Activated T-helper 2 cell treated with anti-CD3 and anti-CD28 coated beads, Interferon-gamma antibody, Interleukin-2, Interleukin-4, amounts not matched to agents 10 μg/mL and 5 μg/mL and 100 μg/mL, durations not matched to agents 14 hours and 24 hours and 36 hours (primary cell): ENCODE measurements at regions of chr5 and their contacts with region 1.

Region 1: GRCh38 chr5:141691867-141692532 is 10.0 kb upstream of the ARAP3 start:
- DNase-seq: peak; percentile 81
- H3K4me3 Mint-ChIP-seq: peak overlapping the region; percentile 80
- H3K27ac Mint-ChIP-seq: peak overlapping the region; percentile 56
- H3K4me1 Mint-ChIP-seq: peaks cover 29% of the 10 kb centered on the region
- H3K27me3 Mint-ChIP-seq: peaks cover 35% of the 10 kb centered on the region

Region 2: DNA sequence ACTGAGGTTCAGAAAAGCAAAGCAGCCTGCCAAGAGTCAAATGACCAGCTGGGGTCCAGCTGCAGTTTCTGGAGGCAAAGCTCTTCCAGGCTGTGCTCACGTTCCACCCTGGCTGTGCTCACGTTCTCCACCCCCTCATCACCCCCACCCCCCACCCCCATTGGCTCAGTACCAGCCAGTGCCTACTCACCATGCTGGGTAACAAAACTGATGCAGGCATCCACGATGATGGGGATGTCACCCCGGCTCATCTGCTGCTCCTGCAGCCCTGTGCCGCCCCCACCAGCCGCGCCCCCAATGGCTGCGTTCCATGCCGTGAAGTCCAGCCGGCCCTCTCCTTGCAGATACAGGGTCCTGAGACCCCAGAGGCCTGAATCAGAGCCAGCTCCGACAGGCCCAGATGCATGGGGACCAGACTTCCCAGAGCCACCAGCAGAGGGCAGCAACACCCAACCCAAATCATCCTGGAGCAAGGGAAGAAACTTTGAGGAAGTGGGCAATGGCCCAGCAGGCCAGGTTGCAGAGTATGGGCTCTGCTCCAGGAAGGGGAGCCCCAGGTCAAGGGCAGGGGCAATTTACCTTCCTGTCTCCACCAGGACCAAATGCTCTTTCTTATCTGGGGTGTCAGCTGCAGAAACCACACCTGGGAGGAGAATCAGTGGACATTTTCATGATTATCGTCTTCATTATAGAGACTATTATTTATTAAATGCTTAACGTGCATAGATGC is 27.1 kb before region 1 on chr5:
- intact Hi-C with region 1: no loop called
- DNase-seq: peak; percentile 61
- H3K4me3 Mint-ChIP-seq: no peak overlapping the region
- H3K27ac Mint-ChIP-seq: no peak overlapping the region
- H3K4me1 Mint-ChIP-seq: peaks cover 5% of the 10 kb centered on the region
- H3K27me3 Mint-ChIP-seq: no peaks in the 10 kb centered on the region

Region 3: GRCh38 chr5:141677415-141677814 is 14.6 kb before region 1 on chr5:
- intact Hi-C with region 1: no loop called
- DNase-seq: no peak
- H3K4me3 Mint-ChIP-seq: no peak overlapping the region
- H3K27ac Mint-ChIP-seq: no peak overlapping the region
- H3K4me1 Mint-ChIP-seq: peaks cover 9% of the 10 kb centered on the region
- H3K27me3 Mint-ChIP-seq: no peaks in the 10 kb centered on the region

Region 4: DNA sequence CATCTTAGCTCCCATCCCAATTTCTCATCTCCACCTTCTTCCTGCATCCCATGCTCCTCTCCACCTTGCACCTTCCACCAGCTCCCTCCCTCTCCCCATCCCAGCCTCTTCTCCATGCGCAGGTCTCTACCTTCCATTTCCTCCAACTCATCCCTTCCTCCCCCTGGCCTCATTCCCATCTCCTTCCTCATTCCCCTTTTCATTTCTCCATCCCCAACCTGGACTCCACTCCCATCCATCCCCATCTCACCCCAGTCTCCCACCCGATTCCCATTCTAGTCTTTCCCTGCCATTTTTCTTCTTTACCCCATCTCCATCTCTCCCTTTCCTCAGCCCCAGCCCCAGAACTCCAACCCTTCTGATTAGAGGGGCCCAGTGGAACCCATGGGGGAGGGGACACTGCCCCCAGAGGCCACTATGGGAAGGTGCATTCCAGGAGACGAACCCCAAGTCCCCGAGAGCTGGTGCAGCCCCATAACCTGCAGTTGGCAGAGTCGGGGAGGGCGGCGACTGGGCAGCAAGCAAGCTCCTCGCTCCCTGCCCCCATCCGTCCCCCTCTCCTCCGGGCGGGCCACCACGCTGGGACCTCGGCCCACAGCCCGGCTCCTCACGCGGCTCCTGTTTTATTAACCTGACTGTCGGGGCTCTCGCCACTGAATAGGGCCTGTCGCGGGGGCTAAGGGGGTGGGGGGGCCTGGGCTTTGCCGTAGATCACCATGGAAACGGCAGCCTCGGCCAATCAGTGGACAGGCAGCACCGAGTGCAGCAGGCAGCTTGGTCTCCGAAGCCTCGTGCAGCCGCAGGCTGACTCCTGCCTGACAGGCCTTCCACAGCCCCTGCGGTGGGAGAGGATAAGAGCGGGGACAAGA is 119.5 kb after region 1 on chr5:
- intact Hi-C with region 1: loop called (anchors 1 kb)
- DNase-seq: no peak
- H3K4me3 Mint-ChIP-seq: no peak overlapping the region
- H3K27ac Mint-ChIP-seq: no peak overlapping the region
- H3K4me1 Mint-ChIP-seq: no peaks in the 10 kb centered on the region
- H3K27me3 Mint-ChIP-seq: peaks cover 37% of the 10 kb centered on the region

Region 5: DNA sequence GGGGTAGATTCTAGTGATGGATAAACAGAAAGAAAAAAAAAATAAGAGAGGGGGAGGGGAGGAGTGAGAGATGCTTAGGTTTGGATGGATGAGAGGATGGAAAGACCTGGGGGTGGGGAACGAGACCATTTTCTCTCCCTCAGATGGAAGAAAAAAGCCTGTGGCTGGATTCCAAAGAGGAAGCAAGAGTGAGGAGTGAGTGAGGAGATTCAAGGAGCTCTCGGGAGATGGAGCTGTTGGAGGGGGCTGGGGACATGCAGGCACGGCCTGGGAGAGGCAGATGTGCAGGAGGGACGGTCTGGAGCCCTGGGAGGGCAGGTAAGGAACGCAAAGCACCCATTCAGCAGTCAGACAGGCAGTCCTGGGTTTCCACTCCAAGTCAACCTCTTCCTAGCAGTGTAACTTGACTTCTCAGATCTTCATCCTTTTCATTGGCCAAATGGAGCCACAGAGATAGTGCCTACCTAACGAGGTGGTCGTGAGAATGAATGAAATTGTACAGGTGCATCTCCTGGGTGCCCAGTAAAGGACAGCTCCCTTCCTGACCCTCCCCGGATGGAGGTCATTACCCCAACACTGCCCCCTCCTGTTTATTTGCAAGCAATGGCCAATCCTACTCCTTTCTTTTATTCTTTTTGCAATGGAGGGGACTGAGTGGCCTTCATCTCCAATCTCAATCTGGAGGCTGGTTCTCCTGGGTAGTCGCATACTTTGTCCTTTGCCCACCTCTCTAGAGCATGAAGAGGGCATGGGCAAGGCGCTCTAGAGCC is 134.0 kb after region 1 on chr5:
- intact Hi-C with region 1: loop called (anchors 2 kb)
- DNase-seq: no peak
- H3K4me3 Mint-ChIP-seq: no peak overlapping the region
- H3K27ac Mint-ChIP-seq: no peak overlapping the region
- H3K4me1 Mint-ChIP-seq: no peaks in the 10 kb centered on the region
- H3K27me3 Mint-ChIP-seq: peaks cover 26% of the 10 kb centered on the region

Region 6: GRCh38 chr5:141855265-141856036 is 163.5 kb after region 1 on chr5:
- intact Hi-C with region 1: no loop called
- DNase-seq: no peak
- H3K4me3 Mint-ChIP-seq: no peak overlapping the region
- H3K27ac Mint-ChIP-seq: no peak overlapping the region
- H3K4me1 Mint-ChIP-seq: no peaks in the 10 kb centered on the region
- H3K27me3 Mint-ChIP-seq: peaks cover 10% of the 10 kb centered on the region

Region 7: DNA sequence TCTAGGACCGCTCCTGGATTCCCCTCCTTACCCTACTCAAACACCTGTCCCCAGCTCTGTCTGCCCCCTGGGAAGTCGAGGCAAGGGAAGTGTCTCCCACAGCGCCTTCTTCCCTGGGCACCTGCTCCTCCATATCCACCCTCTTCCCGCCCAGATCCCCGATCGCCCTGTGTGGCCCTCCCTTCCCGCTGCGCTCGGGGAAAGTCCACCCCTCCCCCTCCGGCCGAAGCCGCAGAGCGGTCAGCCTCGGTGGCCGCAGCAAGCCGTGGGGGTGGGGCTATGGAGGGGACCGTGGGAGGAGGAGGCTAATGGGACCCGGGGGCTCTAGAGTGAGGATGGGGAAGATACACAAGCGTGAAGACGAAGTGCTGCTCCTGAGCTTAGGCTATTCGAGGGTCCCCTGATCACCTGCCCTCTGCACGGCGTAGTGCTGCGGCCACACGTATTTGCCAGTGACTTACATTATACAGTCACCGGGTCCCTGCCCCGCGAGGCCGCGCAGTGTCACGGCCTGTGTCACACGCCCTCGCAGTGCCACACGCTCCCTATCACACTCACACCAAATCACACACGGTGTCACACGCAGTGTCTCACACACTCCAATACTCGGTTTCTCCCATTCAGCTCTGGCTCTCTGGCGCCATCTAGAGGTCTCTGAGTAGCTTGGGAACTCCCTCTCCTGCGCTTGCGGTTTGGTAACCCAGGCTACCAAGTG is 186.9 kb after region 1 on chr5:
- intact Hi-C with region 1: loop called (anchors 1 kb)
- DNase-seq: peak; percentile 77
- H3K4me3 Mint-ChIP-seq: peak overlapping the region; percentile 78
- H3K27ac Mint-ChIP-seq: peak overlapping the region; percentile 1
- H3K4me1 Mint-ChIP-seq: peaks cover 14% of the 10 kb centered on the region
- H3K27me3 Mint-ChIP-seq: peaks cover 76% of the 10 kb centered on the region

Region 8: GRCh38 chr5:141934099-141934844 is 242.3 kb after region 1 on chr5:
- intact Hi-C with region 1: no loop called
- DNase-seq: no peak
- H3K4me3 Mint-ChIP-seq: no peak overlapping the region
- H3K27ac Mint-ChIP-seq: no peak overlapping the region
- H3K4me1 Mint-ChIP-seq: no peaks in the 10 kb centered on the region
- H3K27me3 Mint-ChIP-seq: no peaks in the 10 kb centered on the region

Region 9: GRCh38 chr5:141960449-141961202 is 268.6 kb after region 1 on chr5:
- intact Hi-C with region 1: loop called (anchors 1 kb)
- DNase-seq: peak; percentile 82
- H3K4me3 Mint-ChIP-seq: no peak overlapping the region
- H3K27ac Mint-ChIP-seq: peak overlapping the region; percentile 76
- H3K4me1 Mint-ChIP-seq: peaks cover 35% of the 10 kb centered on the region
- H3K27me3 Mint-ChIP-seq: no peaks in the 10 kb centered on the region

Region 10: GRCh38 chr5:141968914-141969608 is 277.1 kb after region 1 on chr5 and contains the start of gene RNF14:
- intact Hi-C with region 1: loop called (anchors 2 kb)
- DNase-seq: peak; percentile 95
- H3K4me3 Mint-ChIP-seq: peak within 1 kb of the TSS; percentile 91
- H3K27ac Mint-ChIP-seq: peak within 1 kb of the TSS; percentile 93
- H3K4me1 Mint-ChIP-seq: peaks cover 25% of the 10 kb centered on the region
- H3K27me3 Mint-ChIP-seq: no peaks in the 10 kb centered on the region
- total RNA-seq, gene RNF14: 22.0 and 24.1 TPM in 2 replicates

Region 11: DNA sequence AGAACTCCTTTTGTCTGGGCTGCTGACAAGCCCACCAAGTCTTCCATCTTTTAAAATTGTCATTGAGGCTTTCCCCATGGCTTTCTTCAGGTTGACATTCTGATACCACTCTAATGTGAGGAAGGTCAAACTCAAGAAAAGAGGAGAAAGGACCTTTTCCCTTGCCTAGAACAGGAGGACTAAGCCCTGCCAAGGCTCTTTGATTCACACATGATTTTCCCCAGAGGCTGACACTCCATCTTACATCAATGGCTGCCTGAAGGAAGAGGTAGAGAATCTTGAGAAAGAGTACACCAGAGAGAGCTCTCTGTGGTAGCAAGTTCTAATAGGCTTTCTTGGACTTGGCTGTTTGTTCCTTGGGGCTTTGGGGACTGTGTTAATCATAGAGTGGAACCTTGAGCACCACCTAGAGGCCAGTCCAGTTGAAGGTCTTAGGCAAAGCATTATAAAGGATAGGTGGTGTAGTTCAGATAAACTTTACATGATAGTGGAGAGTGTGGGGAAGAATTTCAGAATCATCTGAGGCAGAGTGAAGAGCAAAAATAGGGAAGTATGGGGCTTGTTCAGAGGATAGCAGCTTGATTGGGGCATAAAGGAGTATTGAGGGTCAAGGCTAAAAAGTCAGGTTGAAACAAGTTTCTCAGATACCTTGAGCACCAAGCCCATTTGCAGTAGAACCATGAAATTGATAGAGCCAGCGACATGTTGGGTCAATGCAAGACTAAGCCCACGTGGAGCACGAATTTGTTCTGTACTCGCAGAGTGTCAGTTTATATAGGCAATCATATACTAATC is 453.3 kb after region 1 on chr5:
- intact Hi-C with region 1: loop called (anchors 10 kb)
- DNase-seq: peak; percentile 45
- H3K4me3 Mint-ChIP-seq: no peak overlapping the region
- H3K27ac Mint-ChIP-seq: no peak overlapping the region
- H3K4me1 Mint-ChIP-seq: peaks cover 3% of the 10 kb centered on the region
- H3K27me3 Mint-ChIP-seq: no peaks in the 10 kb centered on the region